Heart left ventricle (tissue), 16 donors: ENCODE measurements at regions of chr17 and their contacts with region 1.

Region 1: GRCh38 chr17:82320956-82321927 is 3.8 kb upstream of the CD7 start:
- DNase-seq: no peak
- ATAC-seq: peak in 3 of 4 donors; percentile 11 to 64 (median 33)
- H3K4me3 ChIP-seq: peak overlapping the region in 1 of 12 donors; percentile 25
- H3K27ac ChIP-seq: peak overlapping the region in 1 of 12 donors; percentile 9
- H3K4me1 ChIP-seq: peaks cover 0 to 11% (median 4%) of the 10 kb centered on the region in 12 donors
- H3K27me3 ChIP-seq: peaks cover 0 to 21% (median under 1%) of the 10 kb centered on the region in 9 donors
- CTCF ChIP-seq: peak; percentile 84 to 95 (median 90)
- POLR2A ChIP-seq: no peak

Region 2: GRCh38 chr17:82030470-82031302 is 290.6 kb before region 1 on chr17:
- intact Hi-C with region 1: loop called in 4 of 10 experiments (anchors 5 to 10 kb)
- DNase-seq: peak; percentile 79 to 94 (median 85)
- ATAC-seq: peak; percentile 43 to 89 (median 79)
- H3K4me3 ChIP-seq: peak overlapping the region; percentile 23 to 62 (median 52)
- H3K27ac ChIP-seq: peak overlapping the region in 2 of 12 donors; percentile 3 to 50
- H3K4me1 ChIP-seq: peaks cover 0 to 37% (median 16%) of the 10 kb centered on the region in 12 donors
- H3K27me3 ChIP-seq: peaks cover 0 to 9% (median 0%) of the 10 kb centered on the region in 9 donors
- CTCF ChIP-seq: peak; percentile 86 to 98 (median 95)
- POLR2A ChIP-seq: no peak

Region 3: DNA sequence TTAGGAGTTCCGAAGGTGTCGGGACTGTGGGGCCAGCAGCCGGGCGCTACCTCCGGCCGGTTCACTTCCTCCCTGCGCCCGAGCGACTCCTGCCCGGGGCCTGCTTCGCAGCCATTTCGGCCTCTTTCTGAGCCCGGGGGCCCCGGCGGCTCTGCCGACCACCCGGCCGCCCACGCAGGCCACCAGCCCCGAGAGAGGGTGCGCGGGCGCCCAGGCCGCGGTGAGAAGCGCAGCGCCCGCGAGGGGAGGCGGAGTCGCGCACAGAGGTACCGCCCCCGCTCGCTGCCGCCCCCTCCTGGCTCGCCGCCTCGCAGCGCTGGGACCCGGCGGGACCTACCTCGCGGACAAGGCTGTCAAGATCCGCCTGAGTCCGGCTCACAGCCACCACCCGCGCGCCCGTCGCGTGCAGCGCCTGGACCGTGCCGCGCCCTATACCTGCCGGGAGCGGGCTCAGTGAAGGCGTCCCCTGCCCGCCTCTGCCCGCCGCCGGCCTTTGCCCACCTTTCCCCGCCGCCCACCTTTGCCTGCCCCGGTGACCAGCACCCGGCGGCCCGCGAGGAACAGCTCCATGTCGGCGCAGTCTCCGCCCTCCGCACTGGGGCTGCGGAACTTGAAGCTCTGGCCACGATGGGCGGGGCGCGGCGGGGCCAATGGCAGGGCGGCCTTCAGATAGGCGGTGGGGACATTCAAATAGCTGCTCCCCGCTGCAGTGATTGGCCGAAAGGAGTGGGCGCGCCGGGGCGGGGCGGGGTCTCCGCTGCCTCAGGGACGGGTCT is 283.9 kb before region 1 on chr17 and contains the start of gene DCXR:
- intact Hi-C with region 1: loop called in 3 of 10 experiments (anchors 5 to 10 kb)
- DNase-seq: peak; percentile 97 to 99 (median 98)
- ATAC-seq: peak; percentile 97 to 98 (median 97)
- H3K4me3 ChIP-seq: peak within 1 kb of the TSS; percentile 49 to 92 (median 73)
- H3K27ac ChIP-seq: peak within 1 kb of the TSS; percentile 91 to 98 (median 94)
- H3K4me1 ChIP-seq: peaks cover 4 to 31% (median 15%) of the 10 kb centered on the region in 12 donors
- H3K27me3 ChIP-seq: peaks cover 0 to 4% (median 0%) of the 10 kb centered on the region in 9 donors
- CTCF ChIP-seq: peak; percentile 72 to 93 (median 82)
- POLR2A ChIP-seq: peak; percentile 75 to 96
- total RNA-seq, gene DCXR: 139 to 312 (median 185) TPM

Region 4: DNA sequence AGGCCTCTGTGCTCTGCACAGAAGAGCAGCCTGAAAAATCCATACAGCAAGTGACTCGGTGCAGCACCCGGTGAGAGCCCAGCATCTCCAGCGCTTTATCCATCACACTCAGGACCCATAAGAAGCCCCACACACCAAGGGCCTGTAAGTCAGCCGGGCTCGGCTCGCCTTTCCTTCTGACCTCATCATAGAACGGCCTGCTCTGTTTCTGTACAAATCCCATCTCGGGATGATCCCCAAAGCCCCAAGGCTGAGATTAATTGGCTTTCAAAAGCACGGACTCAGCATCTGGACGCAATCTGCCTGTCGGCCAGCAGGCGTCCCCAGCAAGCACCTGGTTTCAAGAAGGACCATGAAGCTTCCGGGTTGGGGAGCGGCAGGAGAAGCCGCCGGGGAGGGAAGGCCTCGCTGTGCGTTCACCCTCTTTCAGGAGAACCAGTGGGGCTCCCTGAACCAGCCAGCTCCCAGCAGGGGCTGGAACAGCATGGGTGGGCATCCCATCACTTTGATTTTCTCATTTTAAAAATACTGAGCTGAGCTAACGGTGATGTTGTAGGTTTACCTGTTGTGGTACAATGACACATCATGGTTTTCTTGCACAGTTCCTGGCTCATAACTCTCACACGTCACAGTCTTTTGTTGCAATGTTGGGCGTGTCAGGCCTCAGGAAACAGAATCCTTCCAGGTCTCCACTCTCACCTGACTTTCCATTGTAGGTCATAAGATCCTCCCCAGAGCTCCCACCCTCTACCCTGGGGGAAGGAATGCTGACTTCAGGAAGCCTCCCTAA is 115.3 kb before region 1 on chr17:
- intact Hi-C with region 1: loop called (anchors 1 to 10 kb)
- DNase-seq: peak; percentile 81 to 91 (median 84)
- ATAC-seq: peak; percentile 57 to 87 (median 86)
- H3K4me3 ChIP-seq: peak overlapping the region in 7 of 12 donors; percentile 11 to 41 (median 17)
- H3K27ac ChIP-seq: peak overlapping the region in 11 of 12 donors; percentile 15 to 86 (median 48)
- H3K4me1 ChIP-seq: peaks cover 0 to 19% (median 8%) of the 10 kb centered on the region in 12 donors
- H3K27me3 ChIP-seq: no peaks in the 10 kb centered on the region
- CTCF ChIP-seq: peak; percentile 79 to 95 (median 92)
- POLR2A ChIP-seq: no peak

Region 5: DNA sequence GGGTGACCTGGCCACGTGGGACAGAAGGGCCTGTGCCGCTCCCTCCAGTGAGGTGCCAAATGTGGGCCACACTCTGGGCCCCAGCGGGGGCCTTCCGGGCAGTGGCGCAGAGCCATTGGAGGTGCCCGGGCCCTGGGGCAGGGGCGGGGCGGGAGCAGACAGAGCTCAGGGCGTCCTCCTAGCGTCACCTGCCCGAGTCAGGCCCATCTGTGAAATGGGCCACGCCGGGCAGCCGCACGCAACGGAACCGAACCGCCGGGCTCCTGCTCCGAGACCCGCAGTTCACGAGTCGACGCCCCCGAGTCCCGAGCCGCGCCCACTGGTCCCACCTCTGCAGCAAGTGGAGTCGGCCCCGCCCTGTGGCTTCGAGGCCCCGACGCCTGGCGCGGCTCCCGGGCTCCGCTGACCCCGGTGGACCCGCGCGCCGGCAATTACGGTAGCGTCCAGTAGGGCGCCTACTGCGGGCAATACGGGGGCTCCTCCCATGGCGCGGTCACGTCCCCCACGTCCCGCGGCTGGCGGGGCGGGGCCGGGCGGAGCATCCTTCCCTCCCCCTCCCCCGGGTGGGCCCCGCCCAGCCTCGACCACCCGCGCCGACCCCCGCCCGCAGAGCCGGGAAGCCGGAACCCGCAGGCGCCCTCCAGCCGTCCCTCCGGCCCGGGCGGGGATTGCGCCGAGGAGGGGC is 90.5 kb before region 1 on chr17:
- intact Hi-C with region 1: loop called in 3 of 10 experiments (anchors 5 to 10 kb)
- DNase-seq: peak; percentile 90 to 95 (median 91)
- ATAC-seq: peak; percentile 57 to 78 (median 74)
- H3K4me3 ChIP-seq: peak overlapping the region; percentile 32 to 93 (median 72)
- H3K27ac ChIP-seq: peak overlapping the region; percentile 85 to 99 (median 93)
- H3K4me1 ChIP-seq: peaks cover 0 to 69% (median 37%) of the 10 kb centered on the region in 12 donors
- H3K27me3 ChIP-seq: peaks cover 0 to 6% (median 0%) of the 10 kb centered on the region in 9 donors
- CTCF ChIP-seq: peak; percentile 37 to 79 (median 62)
- POLR2A ChIP-seq: peak in 1 of 2 donors; percentile 29

Region 6: GRCh38 chr17:82236142-82236981 is 84.9 kb before region 1 on chr17:
- intact Hi-C with region 1: loop called in 8 of 10 experiments (anchors 1 to 10 kb)
- DNase-seq: peak in 4 of 5 donors; percentile 64 to 81 (median 72)
- ATAC-seq: peak in 3 of 4 donors; percentile 3 to 8 (median 6)
- H3K4me3 ChIP-seq: no peak overlapping the region
- H3K27ac ChIP-seq: peak overlapping the region in 2 of 12 donors; percentile 27 to 86
- H3K4me1 ChIP-seq: peaks cover 37 to 91% (median 63%) of the 10 kb centered on the region in 12 donors
- H3K27me3 ChIP-seq: no peaks in the 10 kb centered on the region
- CTCF ChIP-seq: peak; percentile 82 to 90 (median 86)
- POLR2A ChIP-seq: no peak